Tibial artery (tissue), 4 donors: ENCODE measurements at regions of chr4 and their contacts with region 1.

Region 1: DNA sequence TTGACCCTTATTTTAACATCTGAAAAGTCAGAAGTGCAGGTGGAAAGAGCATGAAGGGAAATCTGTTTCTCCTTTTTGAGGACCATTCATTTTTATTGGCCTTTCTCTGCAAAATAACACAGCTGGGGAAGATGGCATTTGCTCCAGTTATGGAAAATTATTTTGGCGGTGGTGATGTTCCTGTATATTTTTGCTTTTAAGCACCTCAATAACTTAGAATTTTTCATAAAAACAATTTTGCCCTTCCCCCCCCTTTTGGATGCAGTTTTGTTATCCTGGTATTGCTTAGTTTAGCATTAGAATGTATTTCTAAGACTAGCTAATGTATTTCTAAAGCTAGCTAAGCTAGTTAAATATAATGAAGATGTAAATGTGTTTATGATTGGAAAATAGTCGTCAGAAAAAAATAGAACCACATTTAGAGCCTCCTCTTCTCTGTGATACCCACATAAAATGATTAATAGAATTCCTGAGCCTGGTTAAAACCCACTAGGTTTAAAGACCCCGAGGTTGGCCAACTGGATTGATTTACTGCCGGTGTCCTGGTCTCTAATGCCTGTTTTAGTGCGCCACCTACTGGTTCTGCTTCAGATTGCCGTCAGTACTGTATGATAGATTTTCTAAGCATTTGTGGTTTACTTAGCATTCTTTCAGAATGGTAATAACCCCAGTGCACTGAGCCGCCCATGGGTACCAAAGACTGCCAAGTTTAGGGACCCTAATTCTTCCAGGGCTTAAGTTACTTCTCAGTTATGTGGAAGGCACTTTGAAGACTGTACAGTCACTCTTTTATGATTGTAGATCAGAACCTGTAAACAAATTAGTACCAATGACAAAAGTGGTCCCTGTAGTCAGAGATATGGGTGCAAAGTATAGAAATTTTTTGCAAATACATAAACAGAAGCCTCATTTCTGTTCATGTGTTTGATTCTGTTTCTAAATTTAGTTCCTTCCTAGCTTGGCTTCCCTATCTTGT is 11.4 kb downstream of the KLF3 start:
- DNase-seq: peak; percentile 85 to 89
- H3K4me3 ChIP-seq: no peak overlapping the region
- H3K27ac ChIP-seq: peak overlapping the region; percentile 58 to 83
- H3K4me1 ChIP-seq: peaks cover 4 to 96% (median 64%) of the 10 kb centered on the region in 4 donors
- H3K27me3 ChIP-seq: no peaks in the 10 kb centered on the region
- CTCF ChIP-seq: peak; percentile 80 to 84

Region 2: GRCh38 chr4:38069271-38069760 is 606.1 kb before region 1 on chr4:
- intact Hi-C with region 1: loop called (anchors 5 kb)
- DNase-seq: no peak
- H3K4me3 ChIP-seq: no peak overlapping the region
- H3K27ac ChIP-seq: no peak overlapping the region
- H3K4me1 ChIP-seq: peaks cover 0 to 15% (median 0%) of the 10 kb centered on the region in 4 donors
- H3K27me3 ChIP-seq: no peaks in the 10 kb centered on the region
- CTCF ChIP-seq: no peak

Region 3: GRCh38 chr4:38179690-38180377 is 495.6 kb before region 1 on chr4:
- intact Hi-C with region 1: loop called (anchors 2 kb)
- DNase-seq: peak; percentile 69 to 73
- H3K4me3 ChIP-seq: no peak overlapping the region
- H3K27ac ChIP-seq: no peak overlapping the region
- H3K4me1 ChIP-seq: peaks cover 0 to 8% (median 3%) of the 10 kb centered on the region in 4 donors
- H3K27me3 ChIP-seq: no peaks in the 10 kb centered on the region
- CTCF ChIP-seq: peak; percentile 92 to 93

Region 4: GRCh38 chr4:38319456-38320342 is 355.7 kb before region 1 on chr4:
- intact Hi-C with region 1: loop called (anchors 5 kb)
- DNase-seq: peak; percentile 97 to 98
- H3K4me3 ChIP-seq: peak overlapping the region; percentile 30 to 47
- H3K27ac ChIP-seq: peak overlapping the region; percentile 67 to 68
- H3K4me1 ChIP-seq: peaks cover 0 to 33% (median 13%) of the 10 kb centered on the region in 4 donors
- H3K27me3 ChIP-seq: no peaks in the 10 kb centered on the region
- CTCF ChIP-seq: peak; percentile 94 to 96